Activated CD4-positive, alpha-beta memory T cell treated with anti-CD3 and anti-CD28 coated beads for 36 hours (primary cell): ENCODE measurements at regions of chr4 and their contacts with region 1.

Region 1: DNA sequence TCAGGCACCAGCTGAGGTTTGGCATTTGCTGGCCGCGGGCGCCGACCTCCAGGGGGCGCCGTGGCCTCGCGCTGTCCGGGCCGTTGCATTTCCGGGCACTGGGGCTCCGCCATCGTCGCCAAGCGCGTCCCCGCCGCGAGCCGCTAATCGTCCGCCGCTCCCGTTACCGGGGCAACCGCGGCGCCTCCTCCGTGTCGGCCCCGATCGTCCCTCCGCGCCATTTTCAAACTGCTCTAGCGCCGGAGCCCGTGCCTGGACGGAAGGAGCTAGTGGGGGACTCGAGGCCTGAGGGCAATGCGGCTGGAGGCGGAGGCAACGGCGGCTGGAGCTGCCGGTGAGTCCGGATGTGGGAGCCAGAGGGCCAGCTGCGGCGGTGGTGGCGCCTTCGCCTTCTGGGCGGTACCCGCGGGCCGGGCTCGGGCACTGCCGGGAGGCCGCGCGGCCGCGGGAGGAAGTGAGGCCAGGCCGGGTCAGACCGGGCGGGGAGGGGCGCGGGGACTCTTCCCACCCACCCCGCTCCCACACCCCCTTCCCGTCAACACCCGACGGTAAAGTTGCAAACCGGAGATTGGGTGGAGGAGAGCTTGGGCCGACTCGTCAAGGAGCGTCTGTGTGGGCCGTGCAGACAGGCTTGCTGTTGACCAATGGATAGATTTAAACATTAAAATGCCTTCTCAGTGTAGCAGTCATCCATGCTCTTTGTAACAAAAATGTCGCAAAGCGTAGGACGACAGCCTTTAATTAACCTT is at the start of gene CEP135:
- DNase-seq: peak; percentile 96
- H3K4me3 Mint-ChIP-seq: peak within 1 kb of the TSS; percentile 80
- H3K27ac Mint-ChIP-seq: peak within 1 kb of the TSS; percentile 91
- H3K4me1 Mint-ChIP-seq: peaks cover 35% of the 10 kb centered on the region
- H3K27me3 Mint-ChIP-seq: no peaks in the 10 kb centered on the region
- total RNA-seq, gene CEP135: 15.5 to 16.8 TPM

Region 2: DNA sequence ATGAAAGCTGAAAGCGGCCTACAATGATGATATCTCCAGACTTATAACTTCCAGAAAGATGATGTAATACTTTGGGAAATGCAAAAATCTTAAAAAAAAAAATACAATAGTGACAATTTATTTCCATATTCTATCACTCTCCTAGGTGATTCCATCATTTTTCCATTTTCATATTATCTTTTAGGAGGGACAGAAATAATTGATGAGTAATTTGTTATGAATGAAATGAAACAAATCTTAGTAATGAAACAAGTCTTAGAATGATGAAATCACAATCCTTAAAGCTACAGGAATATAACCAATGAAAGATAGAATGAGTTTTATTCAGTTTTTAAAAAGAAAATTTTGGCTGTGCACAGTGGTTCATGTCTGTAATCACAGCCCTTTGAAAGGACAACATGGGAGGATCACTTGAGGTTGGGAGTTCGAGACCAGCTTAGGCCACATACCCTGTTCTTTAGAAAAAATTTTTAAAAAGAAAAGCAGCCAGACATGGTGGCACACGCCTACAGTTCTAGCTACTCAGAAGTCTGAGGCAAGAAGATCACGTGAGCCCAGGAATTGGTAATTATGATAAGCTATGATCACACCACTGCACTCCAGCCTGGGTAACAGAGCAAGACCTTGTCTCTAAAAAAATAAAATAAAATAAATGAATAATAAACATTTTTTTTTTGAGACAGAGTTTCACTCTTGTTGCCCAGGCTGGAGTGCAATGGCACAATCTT is 423.9 kb before region 1 on chr4:
- CTCF ChIA-PET with region 1: no interaction called
- POLR2A ChIA-PET with region 1: no interaction called
- intact Hi-C with region 1: no loop called
- DNase-seq: no peak
- H3K4me3 Mint-ChIP-seq: no peak overlapping the region
- H3K27ac Mint-ChIP-seq: no peak overlapping the region
- H3K4me1 Mint-ChIP-seq: peaks cover 12% of the 10 kb centered on the region
- H3K27me3 Mint-ChIP-seq: no peaks in the 10 kb centered on the region

Region 3: DNA sequence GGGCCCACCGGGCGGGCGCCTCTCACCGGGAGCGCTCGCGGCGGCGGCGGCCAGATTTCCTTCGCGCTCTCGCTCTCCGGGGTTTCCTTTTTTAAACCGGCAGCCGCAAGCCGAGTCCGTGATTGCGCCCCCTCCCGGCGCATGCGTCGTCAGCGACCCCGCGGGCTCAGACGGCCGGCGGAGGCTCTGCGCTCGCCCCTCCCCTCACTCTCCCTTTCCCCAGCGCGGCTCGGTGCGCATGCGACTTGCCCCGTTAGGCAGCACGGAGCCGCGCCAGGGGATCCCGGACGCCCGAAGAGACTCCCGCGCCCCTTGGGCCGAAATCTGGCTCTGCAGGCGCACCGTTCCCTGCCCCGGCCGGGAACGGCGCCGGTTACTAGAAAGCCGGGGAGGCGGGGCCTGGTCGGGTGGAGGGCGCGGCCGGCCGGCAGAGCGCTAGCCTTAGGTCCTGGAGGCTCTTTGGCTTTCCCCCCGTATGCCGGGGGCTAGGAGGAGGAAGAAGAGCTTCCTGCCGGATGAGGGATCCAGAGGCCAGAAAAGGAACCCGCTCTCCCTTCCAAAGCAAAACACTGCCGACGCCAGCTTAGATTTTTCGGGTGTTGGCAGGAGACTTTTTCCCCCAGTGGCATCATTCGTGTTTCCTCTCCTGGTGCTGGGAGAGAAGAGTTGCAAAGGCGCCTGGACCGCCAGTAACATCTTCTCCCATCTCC is 402.0 kb before region 1 on chr4 and contains the start of gene CLOCK:
- CTCF ChIA-PET with region 1: interaction called, 3 read pairs
- POLR2A ChIA-PET with region 1: no interaction called
- intact Hi-C with region 1: loop called (anchors 1 kb)
- DNase-seq: peak; percentile 88
- H3K4me3 Mint-ChIP-seq: peak within 1 kb of the TSS; percentile 88
- H3K27ac Mint-ChIP-seq: peak within 1 kb of the TSS; percentile 86
- H3K4me1 Mint-ChIP-seq: peaks cover 52% of the 10 kb centered on the region
- H3K27me3 Mint-ChIP-seq: peaks cover 5% of the 10 kb centered on the region
- total RNA-seq, gene CLOCK: 10.9 to 12.0 TPM

Region 4: DNA sequence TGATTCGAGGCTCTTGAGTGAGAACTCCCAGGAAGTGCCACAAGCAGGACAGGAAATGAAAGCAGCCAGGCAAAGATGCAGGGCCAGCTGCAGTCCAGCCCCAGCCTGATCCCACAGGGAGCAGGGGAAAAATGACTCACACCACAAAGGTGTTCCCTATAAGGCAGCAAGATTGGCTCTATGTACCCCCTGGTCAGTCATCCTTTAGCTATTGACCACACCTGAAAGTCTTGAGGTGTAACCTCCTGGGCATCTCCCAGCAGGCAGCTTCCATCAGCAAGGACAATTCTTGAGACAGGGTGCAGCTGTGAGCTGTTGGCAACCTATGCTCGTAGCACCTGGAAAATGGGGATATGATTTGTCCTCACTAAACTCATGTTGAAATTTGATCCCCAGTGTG is 157.2 kb before region 1 on chr4:
- CTCF ChIA-PET with region 1: no interaction called
- POLR2A ChIA-PET with region 1: no interaction called
- intact Hi-C with region 1: no loop called
- DNase-seq: no peak
- H3K4me3 Mint-ChIP-seq: no peak overlapping the region
- H3K27ac Mint-ChIP-seq: no peak overlapping the region
- H3K4me1 Mint-ChIP-seq: no peaks in the 10 kb centered on the region
- H3K27me3 Mint-ChIP-seq: peaks cover 28% of the 10 kb centered on the region

Region 5: GRCh38 chr4:55906999-55907398 is 41.9 kb before region 1 on chr4:
- CTCF ChIA-PET with region 1: no interaction called
- POLR2A ChIA-PET with region 1: no interaction called
- intact Hi-C with region 1: loop called (anchors 1 kb)
- DNase-seq: no peak
- H3K4me3 Mint-ChIP-seq: no peak overlapping the region
- H3K27ac Mint-ChIP-seq: peak overlapping the region; percentile 65
- H3K4me1 Mint-ChIP-seq: peaks cover 24% of the 10 kb centered on the region
- H3K27me3 Mint-ChIP-seq: no peaks in the 10 kb centered on the region

Region 6: GRCh38 chr4:56118055-56118454 is 169.2 kb after region 1 on chr4:
- CTCF ChIA-PET with region 1: no interaction called
- POLR2A ChIA-PET with region 1: no interaction called
- intact Hi-C with region 1: no loop called
- DNase-seq: no peak
- H3K4me3 Mint-ChIP-seq: no peak overlapping the region
- H3K27ac Mint-ChIP-seq: no peak overlapping the region
- H3K4me1 Mint-ChIP-seq: no peaks in the 10 kb centered on the region
- H3K27me3 Mint-ChIP-seq: peaks cover 4% of the 10 kb centered on the region

Region 7: GRCh38 chr4:56129431-56129861 is 180.5 kb after region 1 on chr4:
- CTCF ChIA-PET with region 1: interaction called, 4 read pairs
- POLR2A ChIA-PET with region 1: no interaction called
- intact Hi-C with region 1: loop called (anchors 5 kb)
- DNase-seq: peak; percentile 25
- H3K4me3 Mint-ChIP-seq: no peak overlapping the region
- H3K27ac Mint-ChIP-seq: no peak overlapping the region
- H3K4me1 Mint-ChIP-seq: no peaks in the 10 kb centered on the region
- H3K27me3 Mint-ChIP-seq: peaks cover 8% of the 10 kb centered on the region

Region 8: GRCh38 chr4:56435306-56435926 is 486.5 kb after region 1 on chr4 and contains the start of gene PPAT:
- CTCF ChIA-PET with region 1: interaction called, 6 read pairs
- POLR2A ChIA-PET with region 1: interaction called, 14 read pairs
- intact Hi-C with region 1: loop called (anchors 1 kb)
- DNase-seq: peak; percentile 99
- H3K4me3 Mint-ChIP-seq: peak within 1 kb of the TSS; percentile 98
- H3K27ac Mint-ChIP-seq: peak within 1 kb of the TSS; percentile 95
- H3K4me1 Mint-ChIP-seq: peaks cover 39% of the 10 kb centered on the region
- H3K27me3 Mint-ChIP-seq: no peaks in the 10 kb centered on the region
- total RNA-seq, gene PPAT: 34.4 to 37.7 TPM

Region 9: DNA sequence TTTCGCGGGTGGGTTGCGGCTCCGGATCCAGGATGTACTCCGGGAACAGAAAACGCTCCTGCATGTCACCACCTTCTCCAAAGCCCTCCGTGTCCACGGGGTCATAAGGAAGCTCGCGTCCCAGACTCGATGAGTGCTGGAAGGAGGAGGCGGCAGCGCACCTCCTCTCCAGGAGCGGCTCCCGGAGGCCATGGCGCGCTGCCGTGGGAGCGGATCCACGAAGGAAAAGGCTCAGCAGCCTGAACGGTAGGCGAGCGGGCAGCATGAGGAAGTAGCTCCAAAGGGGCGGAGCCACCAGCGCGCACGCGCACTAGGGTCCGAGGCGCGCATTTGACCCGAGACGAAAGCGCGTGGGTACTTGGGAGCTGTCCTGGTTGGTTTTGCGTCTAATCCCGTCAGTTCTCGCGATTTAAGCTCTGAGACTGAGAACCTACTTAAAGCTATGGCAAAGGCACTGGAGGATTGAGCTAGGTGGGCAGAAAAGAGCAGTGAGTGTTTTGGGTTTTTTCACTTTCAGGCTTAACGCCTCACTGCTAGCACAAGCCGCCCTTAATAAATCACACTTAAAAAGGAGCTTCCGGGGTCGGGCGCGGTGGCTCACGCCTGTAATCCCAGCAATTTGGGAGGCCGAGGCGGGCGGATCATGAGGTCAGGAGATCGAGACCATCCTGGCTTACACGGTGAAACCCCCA is 1028.6 kb after region 1 on chr4 and contains the start of gene NOA1:
- CTCF ChIA-PET with region 1: no interaction called
- POLR2A ChIA-PET with region 1: interaction called, 3 read pairs
- intact Hi-C with region 1: loop called (anchors 2 kb)
- DNase-seq: peak; percentile 99
- H3K4me3 Mint-ChIP-seq: peak within 1 kb of the TSS; percentile 98
- H3K27ac Mint-ChIP-seq: peak within 1 kb of the TSS; percentile 99
- H3K4me1 Mint-ChIP-seq: peaks cover 52% of the 10 kb centered on the region
- H3K27me3 Mint-ChIP-seq: no peaks in the 10 kb centered on the region
- total RNA-seq, gene NOA1: 25.0 to 26.6 TPM